WTC11 (cell line): ENCODE measurements at regions of chr17 and their contacts with region 1.

Region 1: GRCh38 chr17:77741109-77741508 is 217.4 kb upstream of the TNRC6C start:
- DNase-seq: peak; percentile 79
- ATAC-seq: peak; percentile 31; the same call in 1 of the 2 replicates
- H3K4me3 Mint-ChIP-seq: no peak overlapping the region
- H3K27ac Mint-ChIP-seq: no peak overlapping the region
- H3K4me1 Mint-ChIP-seq: peaks cover 19% of the 10 kb centered on the region
- H3K27me3 Mint-ChIP-seq: peaks cover 14% of the 10 kb centered on the region
- CTCF ChIP-seq: peak; percentile 93

Region 2: GRCh38 chr17:77542551-77543490 is 198.3 kb before region 1 on chr17:
- CTCF ChIA-PET with region 1: interaction called, 11 read pairs
- POLR2A ChIA-PET with region 1: no interaction called
- DNase-seq: peak; percentile 86
- ATAC-seq: peak; percentile 84
- H3K4me3 Mint-ChIP-seq: peak overlapping the region; percentile 13; the same call in 1 of the 2 replicates
- H3K27ac Mint-ChIP-seq: no peak overlapping the region
- H3K4me1 Mint-ChIP-seq: peaks cover 49% of the 10 kb centered on the region
- H3K27me3 Mint-ChIP-seq: peaks cover 20% of the 10 kb centered on the region
- CTCF ChIP-seq: no peak; the same call in 1 of the 2 replicates

Region 3: DNA sequence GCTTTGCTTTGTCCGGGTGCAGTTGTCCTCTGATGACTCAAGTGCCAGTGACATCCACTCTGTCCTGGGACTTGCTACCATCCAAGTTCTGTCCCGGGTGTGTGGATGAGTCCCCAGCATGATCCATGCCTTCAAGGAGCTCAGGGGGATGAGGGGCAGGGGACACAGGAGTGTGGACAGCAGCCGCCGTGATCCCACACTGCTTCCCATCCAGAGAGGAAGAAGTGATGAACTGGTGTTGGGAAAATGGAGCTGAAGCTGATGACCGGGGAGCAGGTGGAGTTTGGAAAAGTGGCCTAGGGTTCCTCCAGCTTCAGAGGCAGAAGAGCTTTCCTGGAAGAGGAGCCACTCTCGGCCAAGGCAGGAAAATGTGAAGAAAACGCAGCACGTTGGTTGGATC is 32.2 kb before region 1 on chr17:
- CTCF ChIA-PET with region 1: interaction called, 12 read pairs
- POLR2A ChIA-PET with region 1: no interaction called
- DNase-seq: no peak
- ATAC-seq: no peak
- H3K4me3 Mint-ChIP-seq: no peak overlapping the region
- H3K27ac Mint-ChIP-seq: no peak overlapping the region
- H3K4me1 Mint-ChIP-seq: peaks cover 24% of the 10 kb centered on the region
- H3K27me3 Mint-ChIP-seq: peaks cover 29% of the 10 kb centered on the region
- CTCF ChIP-seq: no peak

Region 4: DNA sequence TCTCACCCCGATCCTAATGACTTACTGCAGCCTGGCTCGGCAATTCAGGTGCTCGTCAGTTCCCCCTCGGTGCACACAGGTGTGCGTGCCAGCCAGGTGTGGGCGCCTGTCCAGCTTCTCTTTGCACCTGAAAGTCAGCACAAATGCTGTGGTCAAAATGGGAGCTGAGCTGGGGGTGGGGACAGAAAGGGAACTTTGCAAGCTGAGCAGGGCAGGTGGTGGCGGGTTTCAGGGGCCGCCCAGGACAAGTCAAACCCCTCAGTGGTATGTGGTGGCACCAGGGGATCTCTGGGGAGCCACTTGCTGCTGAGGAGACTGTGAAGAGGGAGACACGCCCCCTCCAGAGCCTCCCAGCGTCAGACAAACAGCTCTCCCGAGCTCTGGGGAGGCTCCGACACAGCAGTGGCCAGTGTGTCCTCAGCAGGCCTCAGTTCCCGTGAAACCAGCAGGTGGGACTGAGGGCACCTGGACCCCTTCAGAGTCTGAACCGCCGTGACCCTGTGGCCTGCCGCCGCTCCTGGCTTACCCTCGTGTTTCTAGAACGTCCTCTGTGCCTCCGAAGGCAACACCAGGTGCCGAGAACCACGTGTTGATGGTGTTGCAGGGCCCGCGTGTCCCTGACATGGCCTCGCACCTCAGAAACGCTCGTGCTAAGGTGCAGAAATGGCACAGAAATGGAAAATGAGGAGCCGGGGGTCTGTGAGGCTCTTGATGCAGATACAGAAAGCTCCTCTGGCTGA is 16.1 kb before region 1 on chr17:
- CTCF ChIA-PET with region 1: interaction called, 23 read pairs
- POLR2A ChIA-PET with region 1: no interaction called
- DNase-seq: no peak
- ATAC-seq: no peak
- H3K4me3 Mint-ChIP-seq: no peak overlapping the region
- H3K27ac Mint-ChIP-seq: no peak overlapping the region
- H3K4me1 Mint-ChIP-seq: peaks cover 18% of the 10 kb centered on the region
- H3K27me3 Mint-ChIP-seq: peaks cover 2% of the 10 kb centered on the region
- CTCF ChIP-seq: no peak

Region 5: DNA sequence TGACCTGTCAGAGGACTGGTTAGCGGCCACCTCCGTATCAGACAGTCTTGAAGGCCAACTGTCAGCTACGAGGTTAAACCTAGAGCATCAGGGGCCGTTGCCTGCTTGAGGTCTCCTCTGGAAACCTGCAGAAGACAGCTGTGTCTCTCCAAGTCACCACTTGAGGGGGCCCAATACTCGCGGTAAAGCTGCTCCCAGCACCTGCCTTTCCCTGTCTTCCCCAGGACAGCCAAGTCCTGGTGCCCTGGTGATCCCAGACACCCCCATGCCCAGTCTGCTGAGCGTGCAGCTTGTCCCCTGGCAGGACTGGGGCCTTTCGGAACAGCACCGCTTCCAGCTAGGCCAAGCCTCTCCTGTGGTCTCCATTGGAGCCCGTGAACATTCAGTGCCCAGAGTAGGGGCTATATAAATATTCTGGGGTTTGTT is 756.0 kb after region 1 on chr17:
- CTCF ChIA-PET with region 1: no interaction called
- POLR2A ChIA-PET with region 1: no interaction called
- DNase-seq: peak; percentile 85
- ATAC-seq: peak; percentile 84
- H3K4me3 Mint-ChIP-seq: no peak overlapping the region
- H3K27ac Mint-ChIP-seq: no peak overlapping the region
- H3K4me1 Mint-ChIP-seq: peaks cover 16% of the 10 kb centered on the region
- H3K27me3 Mint-ChIP-seq: peaks cover 14% of the 10 kb centered on the region
- CTCF ChIP-seq: peak; percentile 61; the same call in 1 of the 2 replicates